Sciatic nerve (tissue), 2 donors: ENCODE measurements at regions of chr12 and their contacts with region 1.

Region 1: GRCh38 chr12:99767809-99768208 is 120.3 kb downstream of the GARIN6 start:
- DNase-seq: no peak
- ATAC-seq: no peak

Region 2: GRCh38 chr12:99043319-99043914 is 724.4 kb before region 1 on chr12:
- intact Hi-C with region 1: loop called (anchors 5 kb)
- DNase-seq: peak; percentile 80
- ATAC-seq: peak; percentile 53

Region 3: GRCh38 chr12:99706736-99707473 is 60.9 kb before region 1 on chr12:
- intact Hi-C with region 1: no loop called
- DNase-seq: no peak
- ATAC-seq: no peak

Region 4: DNA sequence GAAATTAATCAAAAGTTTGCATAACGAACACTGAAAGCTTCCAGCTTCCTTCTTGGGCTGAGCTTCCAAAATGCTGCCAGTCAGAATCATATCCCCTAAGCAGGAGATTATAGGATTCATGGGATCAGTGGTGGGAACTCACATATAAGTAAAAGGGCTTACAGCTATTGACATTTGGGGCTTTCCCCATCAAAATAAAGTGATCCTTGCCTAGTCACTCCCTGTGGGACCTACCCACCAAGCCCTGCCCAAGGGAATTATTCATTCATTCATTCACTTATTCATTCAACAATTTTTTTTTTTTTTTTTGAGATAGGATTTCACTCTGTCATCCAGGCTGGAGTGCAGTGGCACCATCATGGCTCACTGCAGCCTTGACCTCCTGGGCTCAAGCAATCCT is 658.3 kb after region 1 on chr12:
- intact Hi-C with region 1: no loop called
- DNase-seq: no peak
- ATAC-seq: no peak